ENCODE measurements at regions of chr15 and their contacts with region 1.

Region 1: GRCh38 chr15:75723847-75724660 is 11.4 kb upstream of the CSPG4 start:
- DNase-seq: peak; percentile 90
- H3K4me3 ChIP-seq: no peak overlapping the region
- H3K27ac ChIP-seq: peak overlapping the region in 1 of 3 donors; percentile 37
- H3K4me1 ChIP-seq: peaks cover 11 to 15% of the 10 kb centered on the region in 2 donors
- H3K27me3 ChIP-seq: no peaks in the 10 kb centered on the region
- CTCF ChIP-seq: no peak
- POLR2A ChIP-seq: no peak

Region 2: GRCh38 chr15:75801859-75802593 is 78.0 kb after region 1 on chr15:
- intact Hi-C with region 1: loop called (anchors 10 kb)
- DNase-seq: peak; percentile 78 to 84
- H3K4me3 ChIP-seq: no peak overlapping the region
- H3K27ac ChIP-seq: no peak overlapping the region
- H3K4me1 ChIP-seq: no peaks in the 10 kb centered on the region
- H3K27me3 ChIP-seq: no peaks in the 10 kb centered on the region
- CTCF ChIP-seq: peak; percentile 67 to 97 (median 84)
- POLR2A ChIP-seq: no peak